ENCODE measurements at regions of chr2 and their contacts with region 1.

Region 1: GRCh38 chr2:238370823-238371372 is 50.6 kb downstream of the TRAF3IP1 start:
- DNase-seq: peak; percentile 55 to 68
- ATAC-seq: peak; percentile 96

Region 2: GRCh38 chr2:238053191-238053776 is 317.6 kb before region 1 on chr2:
- intact Hi-C with region 1: no loop called
- DNase-seq: no peak
- ATAC-seq: no peak

Region 3: GRCh38 chr2:238449909-238450417 is 79.1 kb after region 1 on chr2:
- intact Hi-C with region 1: loop called in 1 of 2 experiments (anchors 10 kb)
- DNase-seq: peak; percentile 32 to 54
- ATAC-seq: peak; percentile 18

Region 4: DNA sequence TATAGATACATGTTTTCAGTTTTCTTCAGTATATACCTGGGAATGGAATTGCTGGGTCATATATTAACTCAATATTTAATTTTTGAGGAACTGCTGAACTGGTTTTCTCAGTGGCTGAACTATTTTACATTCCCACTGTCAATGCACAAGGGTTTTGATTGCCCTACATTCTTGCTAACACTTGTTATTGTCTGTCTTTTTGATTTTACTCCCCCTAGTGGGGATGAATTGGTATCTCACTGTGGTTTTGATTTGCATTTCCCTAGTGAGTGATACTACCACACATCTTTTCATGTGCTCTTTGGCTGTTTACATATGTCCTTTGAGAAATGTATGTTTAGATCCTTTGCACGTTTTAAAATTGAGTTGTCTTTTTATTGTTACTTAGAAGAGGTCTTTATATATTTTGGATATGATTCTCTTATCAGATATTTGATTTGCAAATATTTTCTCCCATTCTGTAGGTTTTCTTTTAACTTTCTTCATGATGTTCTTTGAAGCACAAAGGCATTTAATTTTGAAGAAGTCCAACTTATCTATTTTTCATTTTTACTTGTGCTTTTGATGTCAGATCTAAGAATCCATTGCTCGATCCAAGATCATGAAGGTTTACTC is 92.0 kb after region 1 on chr2:
- intact Hi-C with region 1: loop called (anchors 2 to 10 kb)
- DNase-seq: no peak
- ATAC-seq: peak; percentile 87

Region 5: DNA sequence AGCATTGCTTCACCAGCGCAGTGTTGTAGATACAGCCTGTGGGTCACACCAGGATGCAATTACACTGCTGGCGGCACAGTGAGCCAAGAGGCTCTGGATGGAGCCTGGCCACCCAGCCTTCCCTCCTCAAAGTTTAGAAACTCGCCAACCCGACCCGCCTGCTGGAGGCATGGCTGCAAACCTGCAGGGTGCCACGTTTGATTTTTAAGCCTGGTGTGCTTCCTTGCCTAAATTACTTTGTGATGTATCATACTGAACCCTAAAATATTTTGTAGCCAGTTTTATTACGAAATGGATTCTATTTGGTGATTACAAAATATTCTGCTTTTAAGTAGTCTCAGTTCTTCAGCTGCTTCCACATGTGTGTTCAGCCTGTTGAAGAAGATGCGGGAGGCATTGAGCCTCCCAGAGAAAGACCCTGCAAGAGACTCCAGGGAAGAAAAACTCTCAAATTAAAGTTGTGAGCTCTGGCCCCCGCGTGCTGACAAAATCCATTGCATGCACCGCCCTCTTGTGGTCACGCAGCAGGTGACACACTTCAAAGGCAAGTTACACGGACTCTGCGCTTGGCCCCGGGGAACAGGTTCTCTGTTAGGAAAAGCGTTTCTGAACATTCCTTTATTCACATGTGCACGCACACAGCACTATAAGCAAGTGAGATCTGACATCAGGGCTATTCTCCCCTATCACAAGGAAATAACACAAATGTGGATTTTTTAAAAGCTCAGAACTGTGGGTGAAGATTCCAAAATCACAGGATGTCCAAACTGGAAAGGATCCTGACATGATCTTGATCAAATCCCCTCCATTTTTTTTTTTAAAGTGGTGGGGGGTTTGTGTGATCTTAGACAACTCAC is 414.0 kb after region 1 on chr2:
- intact Hi-C with region 1: loop called in 1 of 2 experiments (anchors 10 kb)
- DNase-seq: peak in 1 of 2 donors; percentile 64
- ATAC-seq: peak; percentile 66

Measured in left colon (tissue), 2 donors.